Activated CD4-positive, alpha-beta memory T cell treated with anti-CD3 and anti-CD28 coated beads for 36 hours (primary cell): ENCODE measurements at regions of chr3 and their contacts with region 1.

Region 1: DNA sequence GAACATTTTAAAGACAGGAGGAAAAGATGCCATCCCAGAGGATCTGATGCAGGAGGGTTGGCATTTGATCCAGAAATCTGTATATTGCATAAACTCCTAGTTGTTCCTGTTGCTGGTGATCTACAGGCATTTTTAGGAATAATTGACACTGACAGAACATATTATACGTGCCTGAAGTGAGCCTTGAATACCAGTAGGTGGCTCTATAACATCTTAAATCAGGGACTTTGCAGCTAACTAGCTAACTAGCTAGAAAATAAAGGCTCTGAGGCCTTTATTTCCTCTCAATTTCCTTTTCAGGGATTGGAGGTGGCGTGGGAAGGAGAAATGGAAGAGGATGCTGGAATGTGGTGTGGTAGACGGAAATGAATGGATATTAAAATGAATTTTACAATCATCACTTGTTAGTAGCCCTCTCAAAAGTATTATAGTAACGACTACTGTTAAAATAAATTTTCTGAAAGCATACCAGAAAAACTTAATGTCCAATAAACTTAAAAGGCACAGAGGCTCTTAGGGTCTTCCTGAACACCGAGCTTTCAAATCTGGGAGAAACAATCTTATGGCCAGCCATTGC is 73.9 kb upstream of the ZBED2 start:
- DNase-seq: no peak
- H3K4me3 Mint-ChIP-seq: no peak overlapping the region
- H3K27ac Mint-ChIP-seq: no peak overlapping the region
- H3K4me1 Mint-ChIP-seq: peaks cover 74% of the 10 kb centered on the region
- H3K27me3 Mint-ChIP-seq: no peaks in the 10 kb centered on the region

Region 2: DNA sequence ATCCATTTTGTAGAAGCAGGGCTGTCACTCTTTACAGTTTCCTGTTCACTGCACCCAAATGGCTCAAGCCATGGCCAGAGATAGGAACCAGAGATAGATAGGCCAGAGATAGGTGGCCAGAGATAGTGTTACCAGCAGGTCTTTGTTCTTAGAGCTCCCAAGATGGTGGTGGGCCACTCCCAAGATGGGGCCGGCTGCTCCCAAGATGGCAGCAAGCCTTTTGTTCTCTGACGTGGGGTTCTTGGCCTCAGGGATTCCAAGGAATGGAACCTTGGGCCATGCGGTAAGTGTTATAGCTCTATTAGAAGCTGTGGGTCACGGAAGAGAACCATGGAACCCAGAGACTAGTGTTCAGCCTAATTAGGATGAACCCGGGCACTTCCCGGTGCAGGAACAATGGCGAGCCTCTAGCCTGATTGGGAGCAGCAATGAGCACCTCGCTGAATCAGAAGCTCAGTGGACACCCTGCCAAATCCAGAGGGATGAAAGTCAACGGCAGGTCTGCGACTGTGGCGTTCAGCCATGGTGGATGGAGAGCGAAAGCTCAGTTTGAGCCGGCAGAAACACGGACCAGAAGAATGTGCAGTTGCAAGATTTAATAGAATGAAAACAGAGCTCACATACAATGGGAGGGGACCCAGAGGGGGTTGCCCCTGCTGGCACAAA is 172.0 kb before region 1 on chr3:
- CTCF ChIA-PET with region 1: no interaction called
- POLR2A ChIA-PET with region 1: no interaction called
- intact Hi-C with region 1: no loop called
- DNase-seq: no peak
- H3K4me3 Mint-ChIP-seq: no peak overlapping the region
- H3K27ac Mint-ChIP-seq: no peak overlapping the region
- H3K4me1 Mint-ChIP-seq: no peaks in the 10 kb centered on the region
- H3K27me3 Mint-ChIP-seq: no peaks in the 10 kb centered on the region

Region 3: DNA sequence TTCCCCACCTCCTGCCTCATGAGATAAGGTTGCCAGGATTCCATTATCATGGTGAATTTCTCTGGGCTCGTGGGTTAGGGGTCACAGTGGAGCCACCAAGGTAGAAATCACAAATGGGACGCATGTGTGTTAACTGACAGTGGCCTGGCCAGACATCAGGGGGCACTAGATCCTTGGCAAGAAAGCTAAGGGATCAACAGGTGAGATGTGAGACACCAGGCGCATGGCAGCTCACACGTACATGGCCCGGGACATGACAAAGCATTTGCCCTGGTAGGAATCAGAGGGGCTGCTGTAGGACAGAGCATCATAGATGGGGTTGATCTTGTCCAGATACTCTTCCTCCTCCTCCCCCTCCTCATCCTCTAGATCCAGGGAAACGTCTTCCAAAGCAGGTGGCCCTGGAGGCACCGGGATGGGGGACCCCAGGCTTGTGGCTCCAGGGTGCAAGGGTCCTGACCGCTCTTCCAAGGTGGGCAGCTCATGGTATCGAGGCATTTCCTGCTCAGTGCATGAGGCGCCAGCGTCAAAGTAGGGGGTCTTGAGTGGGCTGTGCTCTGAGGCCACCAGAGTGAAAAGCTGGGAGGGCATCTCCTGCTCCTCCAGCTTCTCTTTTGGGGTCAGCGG is 98.5 kb before region 1 on chr3:
- CTCF ChIA-PET with region 1: no interaction called
- POLR2A ChIA-PET with region 1: no interaction called
- intact Hi-C with region 1: no loop called
- DNase-seq: no peak
- H3K4me3 Mint-ChIP-seq: no peak overlapping the region
- H3K27ac Mint-ChIP-seq: no peak overlapping the region
- H3K4me1 Mint-ChIP-seq: peaks cover 68% of the 10 kb centered on the region
- H3K27me3 Mint-ChIP-seq: no peaks in the 10 kb centered on the region

Region 4: GRCh38 chr3:111648991-111649579 is 19.9 kb before region 1 on chr3:
- CTCF ChIA-PET with region 1: interaction called, 11 read pairs
- POLR2A ChIA-PET with region 1: interaction called, 3 read pairs
- intact Hi-C with region 1: no loop called
- DNase-seq: no peak
- H3K4me3 Mint-ChIP-seq: no peak overlapping the region
- H3K27ac Mint-ChIP-seq: peak overlapping the region; percentile 29
- H3K4me1 Mint-ChIP-seq: peaks cover 19% of the 10 kb centered on the region
- H3K27me3 Mint-ChIP-seq: no peaks in the 10 kb centered on the region

Region 5: DNA sequence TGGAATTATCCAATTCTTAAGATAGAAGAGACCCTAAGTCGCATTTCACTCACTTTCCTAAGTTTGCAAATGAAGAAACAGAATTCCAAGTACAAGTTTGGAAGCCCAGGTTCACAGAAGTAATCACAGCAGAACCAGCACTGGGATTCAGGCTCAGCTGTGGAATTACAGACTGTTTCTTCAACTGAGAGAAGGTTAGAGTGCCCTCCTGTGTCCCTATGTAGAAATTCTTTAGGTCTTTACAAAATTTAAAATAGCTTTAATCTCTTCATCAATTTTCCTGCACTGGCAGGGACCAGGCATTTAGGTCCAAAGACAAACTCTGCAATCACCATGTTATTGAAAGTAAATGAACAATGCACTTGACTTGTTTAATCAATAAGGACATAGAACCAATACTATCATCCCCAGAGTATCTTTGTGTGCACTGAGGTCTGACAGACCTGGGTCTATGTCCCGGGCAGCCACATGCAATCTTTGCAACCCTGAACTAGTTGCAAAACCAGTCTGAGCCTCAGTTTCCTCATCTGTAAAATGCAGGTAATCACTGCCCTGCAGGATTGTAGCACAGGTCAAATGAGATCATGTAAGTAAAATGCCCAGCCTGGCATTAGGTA is 22.4 kb after region 1 on chr3:
- CTCF ChIA-PET with region 1: interaction called, 13 read pairs
- POLR2A ChIA-PET with region 1: interaction called, 3 read pairs
- intact Hi-C with region 1: loop called (anchors 1 kb)
- DNase-seq: no peak
- H3K4me3 Mint-ChIP-seq: no peak overlapping the region
- H3K27ac Mint-ChIP-seq: no peak overlapping the region
- H3K4me1 Mint-ChIP-seq: peaks cover 38% of the 10 kb centered on the region
- H3K27me3 Mint-ChIP-seq: no peaks in the 10 kb centered on the region

Region 6: GRCh38 chr3:111717601-111718000 is 48.6 kb after region 1 on chr3:
- CTCF ChIA-PET with region 1: interaction called, 10 read pairs
- POLR2A ChIA-PET with region 1: no interaction called
- intact Hi-C with region 1: loop called (anchors 1 kb)
- DNase-seq: peak; percentile 79
- H3K4me3 Mint-ChIP-seq: no peak overlapping the region
- H3K27ac Mint-ChIP-seq: no peak overlapping the region
- H3K4me1 Mint-ChIP-seq: no peaks in the 10 kb centered on the region
- H3K27me3 Mint-ChIP-seq: no peaks in the 10 kb centered on the region

Region 7: DNA sequence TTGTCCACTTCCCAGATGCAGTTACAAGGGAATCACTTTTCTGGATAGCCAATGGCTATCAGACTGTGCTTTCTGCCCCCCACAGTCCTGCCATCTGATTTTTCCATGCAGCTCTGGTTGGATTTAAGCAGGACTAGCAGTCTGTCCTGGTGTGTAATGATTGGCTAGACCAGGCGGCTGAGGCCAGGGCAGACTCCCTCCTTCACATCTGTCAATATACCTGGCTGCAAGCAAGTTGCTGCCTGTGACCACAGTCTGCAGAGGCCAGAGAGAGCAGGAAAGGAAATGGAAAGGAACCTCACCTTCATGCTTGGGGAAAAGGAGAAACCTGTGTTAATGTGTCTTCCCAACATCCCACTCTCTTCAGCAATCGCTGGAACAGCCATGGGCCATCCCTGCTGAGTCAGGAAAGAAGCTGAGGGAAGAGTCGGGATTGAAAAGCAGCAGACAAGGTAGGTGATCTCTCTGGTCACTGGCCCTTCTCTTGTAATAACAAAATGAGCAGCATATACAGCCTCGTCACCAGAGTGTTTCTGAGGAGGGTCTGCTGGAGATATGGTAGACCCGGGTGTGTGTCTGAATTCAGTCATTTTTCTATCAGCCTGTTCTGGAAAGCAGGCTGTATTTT is 63.4 kb after region 1 on chr3:
- CTCF ChIA-PET with region 1: no interaction called
- POLR2A ChIA-PET with region 1: no interaction called
- intact Hi-C with region 1: no loop called
- DNase-seq: no peak
- H3K4me3 Mint-ChIP-seq: no peak overlapping the region
- H3K27ac Mint-ChIP-seq: no peak overlapping the region
- H3K4me1 Mint-ChIP-seq: peaks cover 12% of the 10 kb centered on the region
- H3K27me3 Mint-ChIP-seq: no peaks in the 10 kb centered on the region

Region 8: GRCh38 chr3:111967651-111968274 is 298.8 kb after region 1 on chr3:
- CTCF ChIA-PET with region 1: interaction called, 105 read pairs
- POLR2A ChIA-PET with region 1: interaction called, 3 read pairs
- intact Hi-C with region 1: loop called (anchors 1 kb)
- DNase-seq: peak; percentile 87
- H3K4me3 Mint-ChIP-seq: no peak overlapping the region
- H3K27ac Mint-ChIP-seq: no peak overlapping the region
- H3K4me1 Mint-ChIP-seq: peaks cover 21% of the 10 kb centered on the region
- H3K27me3 Mint-ChIP-seq: no peaks in the 10 kb centered on the region